ENCODE measurements at regions of chr12 and their contacts with region 1.

Region 1: DNA sequence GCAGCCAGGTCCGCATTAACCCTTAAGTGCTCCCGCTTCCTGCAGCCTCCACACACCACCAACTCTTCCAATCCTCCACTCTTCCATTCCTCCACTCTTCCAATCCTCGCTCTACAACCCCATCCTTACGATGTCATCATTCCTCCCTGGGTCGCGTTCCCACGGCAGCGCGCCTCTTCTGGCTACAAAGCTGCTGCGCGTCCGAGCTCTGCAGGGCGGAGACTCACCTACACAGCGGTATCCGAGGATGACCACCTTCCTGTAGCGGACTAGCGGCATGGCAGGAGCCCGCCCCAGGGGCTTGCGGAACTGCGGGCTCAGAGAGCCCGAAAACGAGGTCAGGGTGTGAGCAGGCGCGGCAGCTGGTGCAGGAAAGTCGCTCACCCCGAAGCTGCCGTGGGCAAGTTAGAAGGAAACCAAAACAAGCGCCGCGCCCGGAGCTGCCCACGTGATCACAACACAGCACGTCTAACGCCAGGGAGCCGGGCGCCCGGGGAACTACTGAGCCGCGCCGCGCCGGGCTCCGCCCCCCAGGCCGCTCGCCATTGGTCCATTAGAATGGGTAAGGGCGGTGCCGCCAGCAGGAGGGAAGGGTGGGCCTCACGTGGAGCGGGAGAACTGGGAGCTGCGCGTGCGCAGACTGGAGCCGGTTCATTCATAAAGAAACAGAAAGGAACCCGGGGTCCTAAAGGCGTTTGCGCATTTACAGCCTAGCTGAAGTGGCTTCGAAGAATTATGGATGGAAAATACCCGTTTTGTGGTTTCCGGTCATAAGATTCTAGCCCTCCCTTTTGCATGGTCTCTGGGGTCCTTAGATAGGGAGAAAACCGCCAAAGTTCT is at the start of gene RHEBL1:
- DNase-seq: peak; percentile 98
- H3K4me3 ChIP-seq: peak within 1 kb of the TSS; percentile 64 to 81 (median 72)
- H3K27ac ChIP-seq: peak within 1 kb of the TSS; percentile 45
- H3K4me1 ChIP-seq: peaks cover 12% of the 10 kb centered on the region
- H3K27me3 ChIP-seq: no peaks in the 10 kb centered on the region
- CTCF ChIP-seq: peak in 1 of 2 donors; percentile 30
- total RNA-seq, gene RHEBL1: 1.0 to 2.3 TPM

Region 2: DNA sequence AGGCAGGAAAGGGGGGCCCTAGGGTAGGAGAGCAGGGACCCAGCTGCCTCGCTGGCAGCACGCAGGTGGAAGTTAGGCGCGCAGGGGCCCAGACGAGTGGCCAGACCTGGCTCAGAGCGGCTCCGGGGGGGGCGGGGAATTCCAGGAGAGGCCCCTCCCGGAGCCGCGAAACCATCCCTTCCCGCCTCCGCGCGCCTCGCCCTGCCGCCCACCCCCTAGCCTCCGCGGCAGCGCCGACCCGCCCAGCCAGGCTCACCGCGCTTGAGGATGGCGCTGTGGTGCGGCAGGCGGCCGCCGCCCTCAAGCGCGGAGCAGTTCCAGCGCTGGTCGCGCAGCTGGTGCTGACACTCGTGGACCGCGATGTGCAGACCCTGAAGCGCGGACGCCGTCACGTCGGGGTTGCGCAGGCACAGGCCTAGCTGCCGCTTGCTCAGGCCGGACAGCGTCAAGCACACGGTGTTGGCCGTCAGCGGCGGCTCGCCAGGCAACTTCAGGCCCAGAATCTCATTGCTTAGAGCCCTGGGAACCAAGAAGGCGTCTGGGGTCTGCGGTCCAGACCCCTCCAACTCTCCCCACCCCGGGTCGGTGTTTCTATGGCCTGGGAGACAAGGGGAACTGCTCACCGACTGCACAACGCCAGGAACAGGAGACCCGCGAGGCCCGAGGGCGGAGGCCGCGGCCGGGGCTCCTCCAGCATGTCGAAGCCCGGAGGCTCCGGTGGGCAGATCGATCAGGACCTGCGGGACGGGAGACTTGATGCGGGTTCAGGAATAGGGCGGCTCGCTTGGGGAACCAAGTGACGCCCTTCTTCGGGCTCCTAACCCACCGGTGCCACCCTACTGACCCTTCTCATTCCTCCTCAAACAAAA is 99.7 kb before region 1 on chr12:
- CTCF ChIA-PET with region 1: no interaction called
- dilution Hi-C with region 1: loop called (anchors 5 kb)
- in situ Hi-C with region 1: no loop called
- intact Hi-C with region 1: no loop called
- DNase-seq: no peak
- H3K4me3 ChIP-seq: peak overlapping the region in 1 of 3 experiments; percentile 7
- H3K27ac ChIP-seq: no peak overlapping the region
- H3K4me1 ChIP-seq: peaks cover 31% of the 10 kb centered on the region
- H3K27me3 ChIP-seq: no peaks in the 10 kb centered on the region
- CTCF ChIP-seq: peak in 1 of 2 donors; percentile 3

Region 3: DNA sequence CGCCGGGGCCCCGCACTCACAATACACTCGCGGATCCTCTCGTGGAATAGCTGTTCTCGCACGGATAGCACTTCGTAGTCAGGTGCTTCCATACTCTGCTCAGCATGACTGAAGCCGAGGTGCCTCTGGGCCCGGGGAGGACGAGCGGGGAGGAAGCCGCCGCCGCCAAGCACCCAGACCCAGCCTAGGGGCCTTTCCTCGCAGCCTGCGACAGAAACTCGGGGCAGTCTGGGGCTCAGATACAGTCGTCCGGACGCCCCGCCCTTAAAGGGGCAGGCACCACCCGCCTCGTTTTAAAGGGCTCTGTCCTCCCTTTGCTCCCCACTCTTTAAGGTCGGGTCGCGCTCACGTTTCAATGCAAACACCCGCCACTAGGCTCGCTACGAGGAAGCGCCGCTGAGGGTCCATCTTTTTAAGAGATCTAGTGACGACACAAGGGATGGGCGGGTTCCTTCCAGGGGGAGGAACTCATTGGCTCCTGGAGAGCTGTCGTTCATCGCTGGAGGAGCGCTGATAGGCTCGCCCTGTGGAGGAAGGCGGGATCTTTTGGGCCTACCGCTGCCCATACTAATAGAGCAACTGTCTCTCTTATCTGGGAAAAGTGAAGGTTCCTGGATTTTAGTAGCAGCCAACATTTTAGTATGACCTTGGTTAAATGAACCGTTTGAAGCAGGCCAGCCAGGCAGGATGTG is 40.9 kb after region 1 on chr12 and contains the start of gene LMBR1L:
- CTCF ChIA-PET with region 1: no interaction called
- dilution Hi-C with region 1: no loop called
- in situ Hi-C with region 1: loop called in 1 of 2 experiments (anchors 5 kb)
- intact Hi-C with region 1: no loop called
- DNase-seq: peak; percentile 97
- H3K4me3 ChIP-seq: peak within 1 kb of the TSS; percentile 81 to 98 (median 91)
- H3K27ac ChIP-seq: peak within 1 kb of the TSS; percentile 47
- H3K4me1 ChIP-seq: peaks cover 13% of the 10 kb centered on the region
- H3K27me3 ChIP-seq: no peaks in the 10 kb centered on the region
- CTCF ChIP-seq: peak; percentile 36 to 51
- total RNA-seq, gene LMBR1L: 22.8 to 24.2 TPM

Region 4: DNA sequence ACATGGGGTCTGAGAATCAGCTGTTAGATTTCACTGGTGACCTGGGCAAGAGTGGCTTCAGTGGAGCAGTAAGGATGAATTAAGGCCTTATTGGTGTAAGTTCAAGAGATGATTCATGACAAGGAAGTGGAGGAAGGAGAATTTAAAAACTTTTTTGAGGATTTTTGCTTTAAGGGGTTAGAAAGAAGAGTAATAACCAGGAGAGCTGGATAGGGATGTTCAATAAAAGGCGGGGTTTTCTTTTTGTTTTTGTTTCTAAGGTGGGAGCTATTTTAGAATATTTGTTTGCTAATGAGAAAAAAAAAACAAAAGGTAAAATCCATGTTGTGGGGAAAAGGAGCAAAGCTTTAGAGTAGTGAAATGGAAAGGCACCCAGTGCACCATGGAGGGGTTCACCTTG is 76.7 kb after region 1 on chr12:
- CTCF ChIA-PET with region 1: no interaction called
- dilution Hi-C with region 1: no loop called
- in situ Hi-C with region 1: no loop called
- intact Hi-C with region 1: no loop called
- DNase-seq: no peak
- H3K4me3 ChIP-seq: no peak overlapping the region
- H3K27ac ChIP-seq: no peak overlapping the region
- H3K4me1 ChIP-seq: no peaks in the 10 kb centered on the region
- H3K27me3 ChIP-seq: no peaks in the 10 kb centered on the region
- CTCF ChIP-seq: no peak

Region 5: DNA sequence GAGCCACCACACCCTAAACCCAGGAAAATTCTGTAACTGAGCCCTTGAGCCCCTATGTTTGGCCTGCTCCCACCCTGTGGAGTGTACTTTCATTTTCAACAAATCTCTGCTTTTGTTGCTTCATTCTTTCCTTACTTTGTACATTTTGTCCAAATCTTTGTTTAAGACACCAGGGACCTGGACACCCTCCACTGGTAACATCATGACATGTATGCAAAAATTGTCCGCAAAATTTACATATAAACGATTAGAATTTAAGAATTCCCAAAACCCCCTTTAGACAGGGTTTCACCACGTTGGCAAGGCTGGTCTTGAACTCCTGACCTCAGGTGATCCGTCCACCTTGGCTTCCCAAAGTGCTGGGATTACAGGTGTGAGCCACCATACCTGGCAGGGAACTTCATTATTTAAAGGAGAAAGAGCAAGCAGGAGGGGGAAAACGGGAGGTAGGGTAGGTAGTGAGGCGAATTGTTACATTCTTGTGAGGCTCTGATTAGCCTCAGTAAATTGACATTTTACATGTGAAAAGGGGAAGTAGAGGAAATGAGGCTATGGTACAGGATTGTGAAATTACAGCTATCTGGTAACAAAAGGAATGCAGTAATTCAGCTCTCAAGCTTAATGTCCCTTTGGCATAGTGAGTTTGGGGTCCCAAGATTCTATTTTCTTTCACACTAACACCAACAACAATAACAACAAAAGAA is 91.5 kb after region 1 on chr12:
- CTCF ChIA-PET with region 1: no interaction called
- dilution Hi-C with region 1: loop called (anchors 5 kb)
- in situ Hi-C with region 1: no loop called
- intact Hi-C with region 1: no loop called
- DNase-seq: no peak
- H3K4me3 ChIP-seq: no peak overlapping the region
- H3K27ac ChIP-seq: no peak overlapping the region
- H3K4me1 ChIP-seq: no peaks in the 10 kb centered on the region
- H3K27me3 ChIP-seq: no peaks in the 10 kb centered on the region
- CTCF ChIP-seq: no peak

Region 6: DNA sequence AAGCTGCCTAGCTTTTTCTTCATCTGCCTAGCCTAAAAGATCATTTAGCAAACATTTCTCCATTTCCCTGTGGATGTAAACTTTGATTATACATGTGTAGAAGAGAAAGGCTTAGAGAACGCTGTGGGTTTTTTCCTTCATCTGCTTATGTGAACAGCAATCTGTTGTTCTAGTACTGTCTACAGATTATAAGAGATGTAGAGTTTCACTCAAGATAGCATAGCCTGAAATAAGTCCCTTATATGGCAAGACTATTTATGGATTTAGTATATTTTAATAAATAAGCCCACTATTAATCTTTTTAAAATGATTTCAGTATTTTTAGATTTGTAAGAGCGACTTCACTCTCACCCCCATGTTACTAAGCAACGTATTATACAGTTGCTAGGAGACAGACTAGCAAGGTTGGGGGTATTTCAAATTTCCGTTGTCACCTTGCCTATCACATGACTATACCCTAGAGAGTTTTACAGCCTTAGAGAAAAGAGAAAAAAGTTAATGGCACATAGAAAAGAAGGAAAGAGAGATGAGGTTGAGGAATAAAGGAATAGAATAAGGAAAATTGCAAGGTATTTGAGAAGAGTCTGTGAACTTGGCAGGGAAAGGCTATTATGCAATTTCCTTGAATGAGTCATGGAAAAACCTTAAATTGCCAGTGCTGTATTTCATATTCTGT is 131.3 kb after region 1 on chr12:
- CTCF ChIA-PET with region 1: no interaction called
- dilution Hi-C with region 1: loop called (anchors 10 kb)
- in situ Hi-C with region 1: no loop called
- intact Hi-C with region 1: no loop called
- DNase-seq: peak; percentile 76
- H3K4me3 ChIP-seq: peak overlapping the region in 1 of 3 experiments; percentile 11
- H3K27ac ChIP-seq: peak overlapping the region; percentile 96
- H3K4me1 ChIP-seq: peaks cover 21% of the 10 kb centered on the region
- H3K27me3 ChIP-seq: no peaks in the 10 kb centered on the region
- CTCF ChIP-seq: no peak

Region 7: DNA sequence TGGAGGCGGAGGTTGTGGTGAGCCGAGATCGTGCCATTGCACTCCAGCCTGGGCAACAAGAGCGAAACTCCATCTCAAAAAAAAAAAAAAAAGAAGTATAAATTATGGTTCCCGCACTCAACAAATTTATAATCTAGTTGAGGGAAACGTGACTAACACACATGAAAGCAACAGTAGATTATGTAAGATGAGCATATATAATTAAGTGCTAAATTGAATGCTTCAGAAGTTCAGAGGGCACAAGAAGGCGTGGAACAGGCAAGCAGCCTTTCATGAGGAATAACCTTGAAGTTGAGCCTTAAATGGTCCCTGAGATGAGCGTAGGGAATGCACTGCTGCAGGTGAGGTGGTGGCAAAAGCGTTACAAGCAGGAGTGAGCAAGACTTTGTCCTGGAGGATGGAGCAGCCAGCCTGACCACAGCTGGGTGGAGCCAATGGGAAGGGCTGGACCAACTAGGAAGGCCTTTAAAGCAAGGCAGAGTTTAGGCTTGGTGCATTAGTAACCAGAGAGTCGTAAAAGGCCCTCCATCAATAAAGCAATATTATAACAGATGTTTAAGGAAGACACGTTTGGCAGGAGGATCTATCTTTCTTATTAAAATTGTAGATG is 149.8 kb after region 1 on chr12:
- CTCF ChIA-PET with region 1: no interaction called
- dilution Hi-C with region 1: no loop called
- in situ Hi-C with region 1: no loop called
- intact Hi-C with region 1: no loop called
- DNase-seq: no peak
- H3K4me3 ChIP-seq: no peak overlapping the region
- H3K27ac ChIP-seq: no peak overlapping the region
- H3K4me1 ChIP-seq: peaks cover 6% of the 10 kb centered on the region
- H3K27me3 ChIP-seq: no peaks in the 10 kb centered on the region
- CTCF ChIP-seq: no peak

Region 8: DNA sequence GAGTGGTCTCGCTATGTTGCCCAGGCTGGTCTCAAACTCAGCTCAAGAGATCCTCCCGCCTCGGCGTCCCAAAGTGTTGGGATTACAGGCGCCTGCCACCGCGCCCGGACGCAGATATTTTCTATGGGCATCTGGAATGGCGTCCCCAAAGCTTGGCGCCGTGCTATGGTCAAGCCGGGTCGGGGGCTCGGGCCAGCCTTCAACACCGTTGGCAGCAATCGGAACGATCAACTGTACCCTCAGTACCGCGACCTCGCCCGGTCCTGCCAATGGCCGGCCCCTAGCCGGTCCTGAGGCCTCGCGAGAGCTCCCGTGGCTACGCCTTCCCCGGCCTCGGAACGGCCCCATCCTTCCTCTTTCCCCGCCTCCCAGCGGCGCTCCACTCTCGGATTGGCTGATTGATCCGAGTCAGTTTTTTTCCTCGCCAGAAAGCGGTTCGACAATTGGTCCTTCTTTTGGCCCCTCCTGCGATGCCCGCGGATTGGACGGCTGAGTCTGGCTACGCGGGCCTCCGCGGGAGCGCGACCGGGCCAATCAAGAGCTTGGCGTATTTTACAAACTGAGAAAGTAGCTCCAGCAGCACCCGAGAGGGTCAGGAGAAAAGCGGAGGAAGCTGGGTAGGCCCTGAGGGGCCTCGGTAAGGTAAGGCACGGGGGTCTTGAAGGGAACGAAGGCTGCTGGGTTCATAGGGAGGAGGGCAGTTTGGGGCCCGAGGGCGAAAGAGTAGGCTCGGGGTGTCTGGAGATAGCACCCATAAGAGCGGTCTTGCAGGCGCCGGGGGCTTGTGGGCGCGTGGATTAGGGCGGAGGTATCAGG is 253.2 kb after region 1 on chr12 and contains the start of gene TROAP:
- CTCF ChIA-PET with region 1: no interaction called
- dilution Hi-C with region 1: loop called (anchors 10 kb)
- in situ Hi-C with region 1: no loop called
- intact Hi-C with region 1: no loop called
- DNase-seq: peak; percentile 99
- H3K4me3 ChIP-seq: peak within 1 kb of the TSS; percentile 77 to 81 (median 78)
- H3K27ac ChIP-seq: peak within 1 kb of the TSS; percentile 64
- H3K4me1 ChIP-seq: peaks cover 14% of the 10 kb centered on the region
- H3K27me3 ChIP-seq: no peaks in the 10 kb centered on the region
- CTCF ChIP-seq: no peak
- total RNA-seq, gene TROAP: 0.33 to 34.2 TPM

Measured in mammary epithelial cell (primary cell).